Heart right ventricle (tissue), 16 donors: ENCODE measurements at regions of chr7 and their contacts with region 1.

Region 1: DNA sequence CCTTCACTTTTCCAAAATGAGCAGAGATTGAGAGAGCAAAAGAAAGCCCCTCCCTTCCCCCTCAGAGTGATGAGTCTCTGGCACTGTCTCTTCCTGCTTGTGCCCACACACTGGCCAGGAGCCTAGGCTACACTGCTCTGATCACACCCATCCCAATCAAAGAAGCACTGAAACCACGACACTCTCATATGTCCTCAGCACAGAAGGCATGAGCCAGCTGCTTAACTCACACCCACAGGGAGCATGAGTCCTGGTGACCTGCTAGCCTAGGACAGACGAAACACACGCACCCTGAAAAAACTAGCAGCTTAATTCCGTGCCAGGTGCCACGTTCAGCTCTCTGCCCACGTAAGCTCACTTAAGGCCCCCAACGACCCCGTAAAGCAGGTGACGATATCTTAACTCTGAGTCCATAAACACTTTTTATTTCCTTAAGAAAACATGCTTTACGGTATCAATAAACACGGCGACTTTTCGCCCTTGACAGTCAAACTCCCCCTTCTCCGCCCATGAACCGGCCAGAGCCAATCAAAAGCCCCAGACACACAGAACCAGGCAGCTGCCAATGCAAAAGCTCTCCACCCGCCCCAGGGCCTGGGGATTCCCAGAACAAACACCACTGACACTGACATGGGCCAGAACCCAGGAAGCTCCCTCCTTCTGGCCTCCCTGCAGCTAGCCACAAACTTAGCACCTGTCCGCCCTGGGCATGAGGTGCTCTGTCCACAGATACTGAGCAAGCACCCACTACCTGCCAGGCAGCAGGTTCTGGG is 69.0 kb downstream of the TNRC18 start:
- DNase-seq: peak; percentile 65 to 82
- ATAC-seq: peak; percentile 81 to 96 (median 91)
- H3K4me3 ChIP-seq: peak overlapping the region in 5 of 10 donors; percentile 21 to 36 (median 35)
- H3K27ac ChIP-seq: peak overlapping the region; percentile 36 to 79 (median 66)
- H3K4me1 ChIP-seq: peaks cover 5 to 30% (median 18%) of the 10 kb centered on the region in 9 donors
- H3K27me3 ChIP-seq: no peaks in the 10 kb centered on the region
- CTCF ChIP-seq: no peak

Region 2: DNA sequence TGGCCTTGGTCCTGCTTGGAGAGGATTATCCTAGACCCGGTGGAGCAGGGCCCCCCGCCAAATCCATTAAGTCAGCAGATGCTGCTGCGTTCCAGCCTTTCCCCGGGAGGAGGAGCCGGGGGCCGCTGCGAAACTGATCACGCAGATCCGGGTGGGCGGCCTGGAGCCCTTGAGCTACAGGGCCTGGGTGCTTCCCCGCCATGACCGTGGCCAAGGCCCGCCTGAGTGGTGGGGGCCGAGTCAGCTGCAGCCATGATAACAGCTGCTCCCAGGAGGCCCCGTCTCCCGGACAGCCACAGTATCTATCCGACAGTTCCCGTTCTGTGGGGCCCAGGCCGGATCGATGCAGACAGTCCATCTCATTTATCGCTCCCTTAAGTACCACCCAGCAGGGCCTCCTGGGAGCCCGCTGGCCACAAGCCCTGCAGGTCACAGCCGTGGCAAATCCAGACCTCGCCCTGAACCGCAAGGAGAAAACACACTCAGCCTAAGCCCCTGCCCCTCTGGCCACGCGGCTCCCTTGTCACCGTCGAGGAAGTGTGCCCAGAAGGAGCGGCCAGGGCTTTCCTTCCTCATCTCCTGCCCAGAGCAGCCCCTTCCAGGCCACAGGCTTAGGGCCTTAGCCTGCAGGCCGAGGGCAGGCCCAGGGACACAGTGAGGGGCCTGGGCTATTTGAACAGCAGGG is 106.3 kb before region 1 on chr7:
- intact Hi-C with region 1: loop called in 2 of 10 experiments (anchors 10 kb)
- DNase-seq: peak; percentile 59 to 76
- ATAC-seq: peak; percentile 72 to 95 (median 90)
- H3K4me3 ChIP-seq: no peak overlapping the region
- H3K27ac ChIP-seq: peak overlapping the region in 2 of 10 donors; percentile 7 to 51
- H3K4me1 ChIP-seq: peaks cover 0 to 7% (median 0%) of the 10 kb centered on the region in 9 donors
- H3K27me3 ChIP-seq: peaks cover 0 to 12% (median 0%) of the 10 kb centered on the region in 7 donors
- CTCF ChIP-seq: no peak

Region 3: DNA sequence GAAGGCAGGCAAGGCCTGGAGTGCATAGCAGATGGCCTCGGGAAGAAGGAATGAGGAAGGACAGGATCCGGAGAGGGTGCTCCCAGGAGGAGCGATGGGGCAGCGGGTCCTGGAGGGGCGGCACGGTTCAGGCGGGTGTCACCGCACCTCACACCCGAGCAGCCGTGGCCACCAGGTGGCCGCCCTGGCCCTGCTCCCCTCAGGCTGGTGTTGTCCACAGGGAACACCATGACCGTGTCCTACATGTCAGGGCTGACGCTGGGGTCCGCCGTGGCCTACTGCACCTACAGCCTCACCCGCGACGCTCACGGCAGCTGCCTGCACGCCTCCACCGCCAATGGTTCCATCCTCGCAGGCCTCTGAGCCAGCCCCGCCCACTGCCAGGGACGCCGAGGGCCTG is 52.1 kb before region 1 on chr7:
- intact Hi-C with region 1: loop called in 1 of 10 experiments (anchors 5 kb)
- DNase-seq: no peak
- ATAC-seq: peak in 1 of 8 donors; percentile 16
- H3K4me3 ChIP-seq: no peak overlapping the region
- H3K27ac ChIP-seq: no peak overlapping the region
- H3K4me1 ChIP-seq: no peaks in the 10 kb centered on the region
- H3K27me3 ChIP-seq: peaks cover 0 to 13% (median 5%) of the 10 kb centered on the region in 7 donors
- CTCF ChIP-seq: no peak